A673 (cell line): ENCODE measurements at regions of chr16 and their contacts with region 1.

Region 1: GRCh38 chr16:1511662-1512575 is 18.8 kb downstream of the TELO2 start:
- DNase-seq: no peak
- H3K4me3 ChIP-seq: no peak overlapping the region
- H3K27ac ChIP-seq: no peak overlapping the region
- H3K4me1 ChIP-seq: no peaks in the 10 kb centered on the region
- H3K27me3 ChIP-seq: no peaks in the 10 kb centered on the region
- CTCF ChIP-seq: no peak

Region 2: GRCh38 chr16:1420111-1420540 is 91.8 kb before region 1 on chr16:
- CTCF ChIA-PET with region 1: no interaction called
- POLR2A ChIA-PET with region 1: interaction called, 14 read pairs
- intact Hi-C with region 1: no loop called
- DNase-seq: no peak
- H3K4me3 ChIP-seq: peak overlapping the region; percentile 91
- H3K27ac ChIP-seq: peak overlapping the region; percentile 91
- H3K4me1 ChIP-seq: peaks cover 7% of the 10 kb centered on the region
- H3K27me3 ChIP-seq: no peaks in the 10 kb centered on the region
- CTCF ChIP-seq: no peak

Region 3: GRCh38 chr16:1450218-1450617 is 61.7 kb before region 1 on chr16:
- CTCF ChIA-PET with region 1: no interaction called
- POLR2A ChIA-PET with region 1: no interaction called
- intact Hi-C with region 1: no loop called
- DNase-seq: no peak
- H3K4me3 ChIP-seq: no peak overlapping the region
- H3K27ac ChIP-seq: no peak overlapping the region
- H3K4me1 ChIP-seq: no peaks in the 10 kb centered on the region
- H3K27me3 ChIP-seq: no peaks in the 10 kb centered on the region
- CTCF ChIP-seq: peak; percentile 28; the same call in 1 of the 2 replicates

Region 4: GRCh38 chr16:1971796-1972489 is 460.0 kb after region 1 on chr16 and contains the start of gene TBL3:
- CTCF ChIA-PET with region 1: no interaction called
- POLR2A ChIA-PET with region 1: no interaction called
- intact Hi-C with region 1: no loop called
- DNase-seq: peak; percentile 97
- H3K4me3 ChIP-seq: peak within 1 kb of the TSS; percentile 100
- H3K27ac ChIP-seq: peak within 1 kb of the TSS; percentile 94
- H3K4me1 ChIP-seq: peaks cover 5% of the 10 kb centered on the region
- H3K27me3 ChIP-seq: no peaks in the 10 kb centered on the region
- CTCF ChIP-seq: no peak
- total RNA-seq, gene TBL3: 58.4 and 64.1 TPM in 2 replicates